CD4-positive, alpha-beta T cell (primary cell): ENCODE measurements at regions of chr18 and their contacts with region 1.

Region 1: GRCh38 chr18:35267161-35267651 is 22.8 kb downstream of the ZSCAN30 start:
- DNase-seq: peak; percentile 40 to 85 (median 66)
- ATAC-seq: peak; percentile 76
- H3K4me3 ChIP-seq: peak overlapping the region; percentile 76
- H3K4me3 Mint-ChIP-seq: peak overlapping the region; percentile 96
- H3K27ac ChIP-seq: peak overlapping the region; percentile 69 to 75
- H3K27ac Mint-ChIP-seq: peak overlapping the region; percentile 92
- H3K4me1 ChIP-seq: peaks cover 18% of the 10 kb centered on the region
- H3K4me1 Mint-ChIP-seq: peaks cover 28% of the 10 kb centered on the region
- H3K27me3 ChIP-seq: no peaks in the 10 kb centered on the region
- H3K27me3 Mint-ChIP-seq: no peaks in the 10 kb centered on the region
- CTCF ChIP-seq: no peak

Region 2: DNA sequence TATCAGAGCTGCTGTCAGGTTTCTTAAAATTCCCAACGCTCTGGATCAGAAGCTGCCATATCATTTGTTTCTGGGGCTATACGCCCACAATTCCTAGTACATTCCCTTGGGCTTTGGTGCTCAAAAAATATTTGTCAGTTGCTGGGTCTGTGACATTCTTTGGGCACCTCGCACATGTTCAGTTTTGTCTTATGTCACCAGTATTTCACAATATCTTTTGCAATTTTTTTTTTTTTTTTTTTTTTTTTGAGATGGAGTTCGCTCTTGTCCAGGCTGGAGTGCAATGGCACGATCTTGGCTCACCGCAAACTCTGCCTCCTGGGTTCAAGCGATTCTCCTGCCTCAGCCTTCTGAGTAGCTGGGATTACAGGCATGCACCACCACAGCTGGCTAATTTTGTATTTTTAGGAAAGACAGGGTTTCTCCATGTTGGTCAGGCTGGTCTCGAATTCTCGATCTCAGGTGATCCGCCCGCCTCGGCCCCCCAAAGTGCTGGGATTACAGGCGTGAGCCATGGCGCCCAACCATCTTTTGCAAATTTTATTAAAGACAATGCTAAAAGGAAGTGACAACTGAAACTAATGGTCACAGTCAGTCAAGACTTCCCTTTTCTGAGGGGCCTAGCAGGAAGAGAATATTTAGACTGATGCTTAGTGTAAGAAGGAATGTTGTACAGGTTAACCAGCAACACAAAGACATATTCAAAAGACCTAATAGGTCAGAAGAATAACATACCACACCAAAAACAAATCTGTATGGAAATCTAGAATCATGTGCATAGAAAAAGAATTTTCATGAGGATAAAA is 19.6 kb before region 1 on chr18:
- CTCF ChIA-PET with region 1: interaction called, 4 read pairs
- POLR2A ChIA-PET with region 1: interaction called, 10 read pairs
- intact Hi-C with region 1: loop called in 1 of 2 experiments (anchors 1 kb)
- DNase-seq: peak in 1 of 14 experiments; percentile 10
- ATAC-seq: no peak
- H3K4me3 ChIP-seq: no peak overlapping the region
- H3K4me3 Mint-ChIP-seq: no peak overlapping the region
- H3K27ac ChIP-seq: no peak overlapping the region
- H3K27ac Mint-ChIP-seq: no peak overlapping the region
- H3K4me1 ChIP-seq: peaks cover under 1% of the 10 kb centered on the region
- H3K4me1 Mint-ChIP-seq: peaks cover 27% of the 10 kb centered on the region
- H3K27me3 ChIP-seq: no peaks in the 10 kb centered on the region
- H3K27me3 Mint-ChIP-seq: no peaks in the 10 kb centered on the region
- CTCF ChIP-seq: no peak

Region 3: DNA sequence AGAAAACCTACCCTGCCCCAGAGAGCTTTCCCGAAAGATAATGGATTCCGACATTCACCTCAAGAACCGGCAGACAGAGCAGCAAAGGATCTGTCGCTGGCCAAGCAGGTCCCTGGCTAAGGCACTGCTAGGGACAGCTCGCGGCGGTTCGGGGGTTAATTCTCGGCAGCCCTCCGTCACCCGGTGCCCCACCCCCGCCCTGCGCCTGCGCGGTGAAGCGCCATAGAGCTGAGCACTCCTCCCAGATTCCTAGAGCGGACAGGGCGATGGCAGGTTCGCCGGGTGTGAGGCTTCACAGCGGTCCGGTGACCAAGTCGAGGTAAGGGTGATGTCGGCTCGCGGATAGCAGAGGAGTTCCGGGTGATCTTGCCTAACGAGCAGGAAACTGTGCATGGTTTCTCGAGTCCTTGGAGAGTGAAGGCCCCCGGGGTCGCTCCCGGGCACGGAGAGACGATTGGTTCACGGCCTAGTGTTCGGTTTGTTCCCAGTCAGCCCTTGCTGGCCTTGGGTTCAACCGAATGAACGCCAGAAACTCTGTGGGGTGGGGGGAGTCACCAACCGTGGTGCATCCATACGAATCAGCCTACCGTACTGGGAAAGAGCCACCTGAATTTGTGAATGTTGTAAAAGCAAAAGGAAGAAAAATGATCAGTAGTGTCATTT is 23.0 kb after region 1 on chr18 and contains the start of gene ZSCAN30:
- CTCF ChIA-PET with region 1: interaction called, 4 read pairs
- POLR2A ChIA-PET with region 1: interaction called, 52 read pairs
- intact Hi-C with region 1: loop called (anchors 1 kb)
- DNase-seq: peak; percentile 93 to 98 (median 96)
- ATAC-seq: peak; percentile 90
- H3K4me3 ChIP-seq: peak within 1 kb of the TSS; percentile 92
- H3K4me3 Mint-ChIP-seq: peak within 1 kb of the TSS; percentile 99
- H3K27ac ChIP-seq: peak within 1 kb of the TSS; percentile 55 to 87
- H3K27ac Mint-ChIP-seq: peak within 1 kb of the TSS; percentile 96
- H3K4me1 ChIP-seq: peaks cover 31% of the 10 kb centered on the region
- H3K4me1 Mint-ChIP-seq: peaks cover 78% of the 10 kb centered on the region
- H3K27me3 ChIP-seq: no peaks in the 10 kb centered on the region
- H3K27me3 Mint-ChIP-seq: no peaks in the 10 kb centered on the region
- CTCF ChIP-seq: no peak
- total RNA-seq, gene ZSCAN30: 9.6 to 11.6 TPM